CD4-positive, alpha-beta T cell (primary cell): ENCODE measurements at regions of chr19 and their contacts with region 1.

Region 1: DNA sequence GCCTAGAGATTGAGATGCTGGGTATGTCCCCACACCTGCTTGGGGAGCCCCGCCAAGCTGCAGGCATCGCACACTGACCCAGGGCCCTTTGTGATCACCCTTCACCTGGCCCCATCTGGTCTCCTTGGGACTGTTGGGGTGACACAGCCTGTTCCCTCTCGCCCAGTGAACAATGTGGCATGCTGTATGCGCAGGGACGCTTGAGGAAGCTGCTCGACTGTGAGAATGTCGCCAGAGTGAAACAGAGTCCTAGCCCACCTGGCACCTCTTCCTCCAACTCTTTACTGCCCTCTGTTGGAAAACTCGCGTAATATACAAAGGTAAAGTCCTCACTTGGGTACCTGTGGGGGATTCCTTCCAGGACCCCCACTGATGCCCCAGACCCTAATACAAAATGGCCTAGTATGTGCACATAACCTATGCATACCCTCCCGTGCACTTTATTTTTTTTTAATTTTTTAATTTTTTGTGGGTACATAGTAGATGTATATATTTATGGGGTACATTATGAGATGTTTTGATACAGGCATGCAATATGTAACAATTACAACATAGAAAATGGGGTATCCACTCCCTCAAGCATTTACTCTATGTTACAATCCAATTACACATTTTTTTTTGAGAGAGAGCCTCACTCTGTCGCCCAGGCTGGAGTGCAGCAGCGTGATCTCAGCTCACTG is 9.0 kb downstream of the BLOC1S3 start:
- DNase-seq: peak in 5 of 14 experiments; percentile 21 to 72 (median 66)
- ATAC-seq: peak; percentile 95
- H3K4me3 ChIP-seq: no peak overlapping the region
- H3K4me3 Mint-ChIP-seq: no peak overlapping the region
- H3K27ac ChIP-seq: no peak overlapping the region
- H3K27ac Mint-ChIP-seq: no peak overlapping the region
- H3K4me1 ChIP-seq: peaks cover 12% of the 10 kb centered on the region
- H3K4me1 Mint-ChIP-seq: peaks cover 13% of the 10 kb centered on the region
- H3K27me3 ChIP-seq: no peaks in the 10 kb centered on the region
- H3K27me3 Mint-ChIP-seq: no peaks in the 10 kb centered on the region
- CTCF ChIP-seq: peak; percentile 77

Region 2: DNA sequence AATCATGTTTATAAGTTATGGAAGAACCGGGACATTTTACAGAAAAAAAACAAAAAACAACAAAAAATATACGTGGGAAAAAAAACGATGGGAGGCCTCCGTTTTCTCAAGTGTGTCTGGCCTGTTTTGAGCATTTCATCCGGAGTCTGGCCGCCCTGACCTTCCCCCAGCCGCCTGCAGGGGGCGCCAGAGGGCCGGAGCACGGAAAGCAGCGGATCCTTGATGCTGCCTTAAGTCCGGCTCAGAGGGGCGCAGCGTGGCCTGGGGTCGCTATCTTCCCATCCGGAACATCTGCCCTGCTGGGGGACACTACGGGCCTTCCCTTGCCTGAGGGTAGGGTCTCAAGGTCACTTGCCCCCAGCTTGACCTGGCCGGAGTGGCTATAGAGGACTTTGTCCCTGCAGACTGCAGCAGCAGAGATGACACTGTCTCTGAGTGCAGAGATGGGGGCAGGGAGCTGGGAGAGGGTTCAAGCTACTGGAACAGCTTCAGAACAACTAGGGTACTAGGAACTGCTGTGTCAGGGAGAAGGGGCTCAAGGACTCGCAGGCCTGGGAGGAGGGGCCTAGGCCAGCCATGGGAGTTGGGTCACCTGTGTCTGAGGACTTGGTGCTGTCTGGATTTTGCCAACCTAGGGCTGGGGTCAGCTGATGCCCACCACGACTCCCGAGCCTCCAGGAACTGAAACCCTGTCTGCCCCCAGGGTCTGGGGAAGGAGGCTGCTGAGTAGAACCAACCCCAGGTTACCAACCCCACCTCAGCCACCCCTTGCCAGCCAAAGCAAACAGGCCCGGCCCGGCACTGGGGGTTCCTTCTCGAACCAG is 283.7 kb before region 1 on chr19:
- CTCF ChIA-PET with region 1: no interaction called
- POLR2A ChIA-PET with region 1: no interaction called
- intact Hi-C with region 1: loop called in 1 of 2 experiments (anchors 5 kb)
- DNase-seq: peak; percentile 39 to 82 (median 69)
- ATAC-seq: peak; percentile 75
- H3K4me3 ChIP-seq: no peak overlapping the region
- H3K4me3 Mint-ChIP-seq: no peak overlapping the region
- H3K27ac ChIP-seq: no peak overlapping the region
- H3K27ac Mint-ChIP-seq: no peak overlapping the region
- H3K4me1 ChIP-seq: peaks cover 17% of the 10 kb centered on the region
- H3K4me1 Mint-ChIP-seq: peaks cover 7% of the 10 kb centered on the region
- H3K27me3 ChIP-seq: peaks cover 18 to 31% of the 10 kb centered on the region in 2 experiments
- H3K27me3 Mint-ChIP-seq: peaks cover 30% of the 10 kb centered on the region
- CTCF ChIP-seq: peak; percentile 97

Region 3: DNA sequence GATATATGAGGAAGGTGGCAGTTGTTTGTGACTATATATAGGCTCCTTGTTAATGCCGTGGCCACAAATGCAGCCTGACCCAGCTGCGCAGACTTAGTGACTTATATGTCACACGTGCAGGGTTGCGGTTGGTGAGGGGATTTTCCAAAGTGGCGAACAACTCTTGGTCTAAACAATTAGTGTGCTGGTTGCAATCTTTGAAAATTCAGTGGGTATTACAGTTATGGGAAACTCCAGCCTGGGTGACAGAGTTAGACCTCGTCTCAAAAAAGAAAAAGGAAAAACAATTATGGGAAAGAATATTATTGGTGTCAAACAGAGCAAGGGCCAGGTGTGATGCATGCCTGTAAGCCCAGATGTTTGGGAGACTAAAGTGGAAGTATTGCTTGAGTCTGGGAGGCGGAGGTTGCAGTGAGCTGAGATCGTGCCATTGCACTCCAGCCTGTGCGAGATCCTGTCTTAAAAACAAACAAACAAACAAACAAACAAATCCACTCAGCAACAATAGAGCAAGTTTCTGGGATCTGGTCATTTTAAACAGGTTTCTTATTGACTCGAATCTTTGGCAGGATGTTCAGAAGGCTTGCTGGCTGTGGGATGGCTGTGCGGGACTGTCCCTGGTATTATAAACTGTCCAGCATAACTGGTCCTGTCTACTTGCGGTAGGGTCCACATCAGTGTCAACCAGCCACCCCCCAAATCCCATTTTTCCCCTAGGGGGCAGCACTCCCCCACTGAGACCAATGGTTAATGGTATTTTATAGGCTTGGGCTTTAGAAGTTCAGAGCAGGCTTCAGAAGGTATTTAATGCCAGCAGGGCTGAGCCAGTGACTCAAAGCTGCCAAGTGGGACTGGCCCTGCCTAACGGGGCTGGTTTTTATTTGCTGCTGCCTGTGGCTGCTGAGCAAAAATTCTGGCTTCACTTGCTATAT is 170.9 kb before region 1 on chr19:
- CTCF ChIA-PET with region 1: no interaction called
- POLR2A ChIA-PET with region 1: no interaction called
- intact Hi-C with region 1: loop called in 1 of 2 experiments (anchors 1 kb)
- DNase-seq: peak; percentile 49 to 95 (median 64)
- ATAC-seq: peak; percentile 82
- H3K4me3 ChIP-seq: peak overlapping the region; percentile 13
- H3K4me3 Mint-ChIP-seq: peak overlapping the region; percentile 56
- H3K27ac ChIP-seq: peak overlapping the region; percentile 67 to 86
- H3K27ac Mint-ChIP-seq: peak overlapping the region; percentile 82
- H3K4me1 ChIP-seq: peaks cover 21% of the 10 kb centered on the region
- H3K4me1 Mint-ChIP-seq: peaks cover 13% of the 10 kb centered on the region
- H3K27me3 ChIP-seq: no peaks in the 10 kb centered on the region
- H3K27me3 Mint-ChIP-seq: no peaks in the 10 kb centered on the region
- CTCF ChIP-seq: peak; percentile 69

Region 4: DNA sequence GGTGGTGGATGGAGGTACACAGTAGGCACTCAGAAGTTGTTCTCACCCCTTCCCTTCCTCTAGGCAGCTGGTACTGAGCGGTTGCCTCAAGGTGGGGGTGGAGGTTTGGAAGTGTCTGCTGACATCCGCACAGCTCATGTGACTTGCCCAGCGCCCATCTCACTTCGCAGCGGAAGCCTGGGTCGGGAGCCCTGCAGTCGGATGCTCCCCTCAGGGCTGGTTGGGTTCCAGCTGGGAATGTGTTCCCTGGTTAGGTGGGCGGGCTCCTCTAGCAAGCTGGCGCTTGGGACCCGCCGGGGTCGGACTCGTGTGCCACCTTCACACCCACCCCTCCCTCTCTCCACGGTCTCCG is 84.4 kb before region 1 on chr19:
- CTCF ChIA-PET with region 1: no interaction called
- POLR2A ChIA-PET with region 1: no interaction called
- intact Hi-C with region 1: loop called in 1 of 2 experiments (anchors 5 kb)
- DNase-seq: peak; percentile 22 to 78 (median 43)
- ATAC-seq: peak; percentile 94
- H3K4me3 ChIP-seq: peak overlapping the region; percentile 52
- H3K4me3 Mint-ChIP-seq: peak overlapping the region; percentile 73
- H3K27ac ChIP-seq: peak overlapping the region; percentile 18 to 48
- H3K27ac Mint-ChIP-seq: peak overlapping the region; percentile 86
- H3K4me1 ChIP-seq: peaks cover 48% of the 10 kb centered on the region
- H3K4me1 Mint-ChIP-seq: peaks cover 61% of the 10 kb centered on the region
- H3K27me3 ChIP-seq: no peaks in the 10 kb centered on the region
- H3K27me3 Mint-ChIP-seq: no peaks in the 10 kb centered on the region
- CTCF ChIP-seq: no peak

Region 5: GRCh38 chr19:45125926-45126493 is 61.6 kb before region 1 on chr19:
- CTCF ChIA-PET with region 1: no interaction called
- POLR2A ChIA-PET with region 1: no interaction called
- intact Hi-C with region 1: loop called in 1 of 2 experiments (anchors 5 kb)
- DNase-seq: peak; percentile 52 to 79 (median 62)
- ATAC-seq: peak; percentile 92
- H3K4me3 ChIP-seq: no peak overlapping the region
- H3K4me3 Mint-ChIP-seq: no peak overlapping the region
- H3K27ac ChIP-seq: no peak overlapping the region
- H3K27ac Mint-ChIP-seq: no peak overlapping the region
- H3K4me1 ChIP-seq: peaks cover 25% of the 10 kb centered on the region
- H3K4me1 Mint-ChIP-seq: peaks cover 31% of the 10 kb centered on the region
- H3K27me3 ChIP-seq: no peaks in the 10 kb centered on the region
- H3K27me3 Mint-ChIP-seq: no peaks in the 10 kb centered on the region
- CTCF ChIP-seq: peak; percentile 70

Region 6: GRCh38 chr19:45137179-45137761 is 50.3 kb before region 1 on chr19:
- CTCF ChIA-PET with region 1: no interaction called
- POLR2A ChIA-PET with region 1: no interaction called
- intact Hi-C with region 1: no loop called
- DNase-seq: no peak
- ATAC-seq: no peak
- H3K4me3 ChIP-seq: no peak overlapping the region
- H3K4me3 Mint-ChIP-seq: no peak overlapping the region
- H3K27ac ChIP-seq: no peak overlapping the region
- H3K27ac Mint-ChIP-seq: no peak overlapping the region
- H3K4me1 ChIP-seq: no peaks in the 10 kb centered on the region
- H3K4me1 Mint-ChIP-seq: no peaks in the 10 kb centered on the region
- H3K27me3 ChIP-seq: no peaks in the 10 kb centered on the region
- H3K27me3 Mint-ChIP-seq: no peaks in the 10 kb centered on the region
- CTCF ChIP-seq: no peak

Region 7: GRCh38 chr19:45902651-45903625 is 715.4 kb after region 1 on chr19:
- CTCF ChIA-PET with region 1: no interaction called
- POLR2A ChIA-PET with region 1: no interaction called
- intact Hi-C with region 1: loop called in 1 of 2 experiments (anchors 10 kb)
- DNase-seq: peak; percentile 97 to 100 (median 99)
- ATAC-seq: peak; percentile 81
- H3K4me3 ChIP-seq: peak overlapping the region; percentile 64
- H3K4me3 Mint-ChIP-seq: peak overlapping the region; percentile 95
- H3K27ac ChIP-seq: peak overlapping the region; percentile 68 to 85
- H3K27ac Mint-ChIP-seq: peak overlapping the region; percentile 89
- H3K4me1 ChIP-seq: peaks cover 26% of the 10 kb centered on the region
- H3K4me1 Mint-ChIP-seq: peaks cover 28% of the 10 kb centered on the region
- H3K27me3 ChIP-seq: no peaks in the 10 kb centered on the region
- H3K27me3 Mint-ChIP-seq: no peaks in the 10 kb centered on the region
- CTCF ChIP-seq: no peak